Heart right ventricle (tissue), 16 donors: ENCODE measurements at regions of chr10 and their contacts with region 1.

Region 1: GRCh38 chr10:2938869-2939268 is 128.5 kb upstream of the PFKP start:
- DNase-seq: no peak
- ATAC-seq: no peak
- H3K4me3 ChIP-seq: no peak overlapping the region
- H3K27ac ChIP-seq: no peak overlapping the region
- H3K4me1 ChIP-seq: no peaks in the 10 kb centered on the region
- H3K27me3 ChIP-seq: peaks cover 0 to 73% (median 48%) of the 10 kb centered on the region in 7 donors
- CTCF ChIP-seq: peak in 3 of 9 donors; percentile 14 to 32 (median 19)

Region 2: DNA sequence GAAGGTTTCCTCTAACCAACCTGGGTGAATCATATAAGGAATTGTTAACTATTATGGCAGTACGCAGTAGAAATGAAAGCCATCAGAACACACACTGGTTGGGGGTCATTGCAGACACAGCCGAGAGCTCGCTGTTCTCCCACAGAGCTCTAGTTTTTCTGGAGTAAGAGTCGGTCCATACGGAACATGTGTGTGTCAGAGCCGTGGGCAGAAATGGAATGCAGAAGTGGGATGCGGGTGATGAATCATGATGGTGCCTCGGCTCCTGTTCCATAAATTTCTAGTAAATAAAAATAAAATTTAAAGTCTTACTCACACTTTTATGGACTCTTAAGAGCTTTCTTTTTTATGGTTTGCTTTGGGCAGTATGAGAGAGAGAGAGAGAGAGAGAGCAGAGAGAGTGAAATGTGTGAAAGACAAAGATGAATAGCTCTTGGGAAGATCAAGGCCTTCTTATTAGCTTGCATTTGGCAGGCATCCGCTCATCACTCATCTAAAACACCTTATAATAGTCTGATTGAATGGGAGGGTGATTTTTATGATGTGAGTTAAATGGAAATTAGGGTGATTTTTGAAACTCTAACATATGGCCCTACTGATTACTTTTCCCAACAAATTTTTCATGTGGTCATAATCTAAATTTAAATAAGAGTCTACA is 29.7 kb after region 1 on chr10:
- intact Hi-C with region 1: no loop called
- DNase-seq: no peak
- ATAC-seq: no peak
- H3K4me3 ChIP-seq: no peak overlapping the region
- H3K27ac ChIP-seq: no peak overlapping the region
- H3K4me1 ChIP-seq: no peaks in the 10 kb centered on the region
- H3K27me3 ChIP-seq: peaks cover 0 to 24% (median 6%) of the 10 kb centered on the region in 7 donors
- CTCF ChIP-seq: no peak

Region 3: DNA sequence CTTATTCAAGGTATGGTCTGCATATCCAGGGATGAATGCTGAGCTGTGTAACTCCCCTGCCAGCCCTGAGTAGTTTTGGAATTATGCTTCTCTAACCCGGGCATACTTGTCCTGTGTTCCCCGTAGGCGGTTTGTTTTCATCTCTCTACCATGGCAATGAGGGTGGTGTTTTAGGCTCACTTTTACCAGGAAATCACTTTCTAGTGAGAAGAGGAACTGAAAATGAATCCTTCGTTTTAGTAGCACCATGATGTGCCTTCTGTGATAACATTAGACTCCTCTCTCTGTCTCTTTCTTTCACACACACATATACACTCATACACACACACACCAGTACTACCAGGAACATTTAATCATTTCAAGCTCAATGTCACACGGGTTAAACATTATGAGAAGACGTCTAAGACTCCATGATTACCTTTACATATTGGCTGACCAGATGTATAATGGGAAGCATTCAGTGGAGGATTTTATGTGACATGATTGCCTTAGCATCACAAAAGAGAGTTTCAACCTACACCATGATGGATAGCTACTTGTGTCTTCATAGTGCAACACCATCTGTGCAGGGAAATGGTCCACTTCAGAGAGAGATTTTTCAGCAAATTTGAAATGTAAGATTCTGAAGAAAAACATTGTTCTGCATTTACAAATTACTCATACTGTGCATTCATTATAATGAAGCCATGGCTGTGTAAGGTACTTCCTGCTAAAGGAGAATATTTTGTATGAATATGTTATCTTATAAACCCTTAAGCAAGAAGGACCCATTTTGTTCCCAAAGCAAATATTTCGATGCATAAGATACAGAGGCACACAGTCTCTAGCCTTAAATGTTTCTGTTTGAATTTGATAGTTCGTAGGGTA is 97.5 kb after region 1 on chr10:
- intact Hi-C with region 1: loop called in 3 of 10 experiments (anchors 5 to 10 kb)
- DNase-seq: no peak
- ATAC-seq: peak in 4 of 8 donors; percentile 10 to 44 (median 26)
- H3K4me3 ChIP-seq: no peak overlapping the region
- H3K27ac ChIP-seq: no peak overlapping the region
- H3K4me1 ChIP-seq: peaks cover 0 to 17% (median 0%) of the 10 kb centered on the region in 9 donors
- H3K27me3 ChIP-seq: peaks cover 0 to 13% (median 0%) of the 10 kb centered on the region in 7 donors
- CTCF ChIP-seq: no peak

Region 4: DNA sequence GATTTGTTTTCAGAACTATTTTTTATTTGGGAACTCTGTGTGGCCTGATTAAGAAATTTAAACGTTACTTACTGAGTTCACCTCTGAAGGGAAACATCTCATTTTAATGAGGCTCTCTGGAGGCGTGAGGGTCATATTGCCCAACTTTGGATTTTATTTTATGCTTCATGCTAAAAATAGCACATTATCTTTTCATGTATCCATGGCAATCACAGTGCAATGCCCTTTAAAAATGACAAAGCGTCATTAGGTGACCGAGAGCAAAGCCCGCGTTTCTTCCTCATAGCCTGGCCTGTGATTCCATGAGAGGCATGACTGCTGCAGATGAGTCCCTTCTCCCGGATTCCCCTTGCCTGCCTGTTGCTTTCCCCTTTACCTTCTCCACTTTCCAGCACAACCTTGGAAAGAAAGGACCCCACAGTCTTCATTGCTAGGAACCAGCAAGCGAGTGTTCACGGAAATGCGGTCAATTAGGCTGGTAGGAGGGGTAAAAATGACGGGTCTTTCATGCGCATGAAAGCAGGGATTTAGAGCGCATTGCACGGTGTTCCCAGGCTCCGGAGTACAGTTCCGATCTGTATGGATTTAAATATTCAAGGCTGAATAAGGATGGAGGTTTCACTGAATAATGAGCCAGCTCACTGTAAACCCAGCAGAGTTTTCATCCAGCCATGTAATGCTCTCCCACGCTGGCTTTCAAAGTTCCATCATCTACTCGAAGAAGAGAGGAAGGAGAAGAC is 331.9 kb after region 1 on chr10:
- intact Hi-C with region 1: no loop called
- DNase-seq: no peak
- ATAC-seq: no peak
- H3K4me3 ChIP-seq: no peak overlapping the region
- H3K27ac ChIP-seq: no peak overlapping the region
- H3K4me1 ChIP-seq: peaks cover 0 to 26% (median 10%) of the 10 kb centered on the region in 9 donors
- H3K27me3 ChIP-seq: no peaks in the 10 kb centered on the region
- CTCF ChIP-seq: no peak